AG04449 (cell line): ENCODE measurements at regions of chr14 and their contacts with region 1.

Region 1: DNA sequence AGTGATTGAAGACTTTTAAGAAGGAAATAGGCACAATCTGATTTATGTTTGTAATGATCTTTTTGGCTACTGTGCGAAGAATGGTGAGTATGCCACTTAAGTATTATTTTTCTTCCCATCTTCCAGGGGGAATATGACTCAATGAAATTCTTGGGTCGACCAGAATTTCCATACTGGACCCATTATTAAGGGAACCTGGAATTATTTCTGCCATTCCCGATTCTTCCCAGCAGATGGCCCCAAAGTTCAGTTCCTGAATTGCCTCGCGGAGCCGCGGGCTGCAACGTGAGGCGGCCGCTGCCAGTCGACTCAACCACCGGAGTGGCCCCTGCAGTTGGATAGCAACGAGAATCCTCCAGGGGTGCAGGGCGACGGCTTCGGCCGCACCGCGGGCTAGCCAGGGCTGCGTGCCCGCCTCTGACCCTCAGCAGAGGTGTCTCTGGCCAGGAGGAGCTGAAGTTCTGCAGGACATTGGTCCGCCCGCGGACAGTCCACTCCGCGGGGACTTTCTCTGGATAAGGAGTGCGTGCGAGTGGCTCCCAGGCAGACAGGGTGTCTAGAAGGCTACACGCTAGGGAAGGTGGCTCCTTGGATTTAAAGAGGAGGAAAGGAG is 628 bp upstream of the TSHR start:
- DNase-seq: peak; percentile 21
- H3K4me3 ChIP-seq: peak overlapping the region; percentile 65
- CTCF ChIP-seq: peak; percentile 59

Region 2: DNA sequence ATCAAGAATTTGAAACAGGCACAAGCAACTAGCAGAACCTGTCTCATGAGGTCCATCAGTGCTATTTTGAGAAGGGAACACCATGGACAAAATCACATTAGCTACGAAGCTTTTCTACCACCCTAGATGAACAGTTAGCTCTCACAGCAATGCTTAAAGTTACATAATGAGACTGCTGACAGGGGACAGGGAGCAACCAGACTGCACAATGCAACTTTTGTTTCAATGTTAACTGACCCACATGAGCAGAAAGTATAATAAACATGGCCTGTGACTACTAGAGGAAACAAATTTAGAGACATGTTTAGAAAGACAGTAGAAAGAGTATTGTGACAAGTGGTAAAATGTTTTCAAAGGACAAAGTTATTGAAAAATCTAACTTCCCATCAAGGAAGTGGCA is 296.1 kb before region 1 on chr14:
- CTCF ChIA-PET with region 1: no interaction called
- POLR2A ChIA-PET with region 1: no interaction called
- DNase-seq: no peak
- H3K4me3 ChIP-seq: no peak overlapping the region
- CTCF ChIP-seq: no peak

Region 3: DNA sequence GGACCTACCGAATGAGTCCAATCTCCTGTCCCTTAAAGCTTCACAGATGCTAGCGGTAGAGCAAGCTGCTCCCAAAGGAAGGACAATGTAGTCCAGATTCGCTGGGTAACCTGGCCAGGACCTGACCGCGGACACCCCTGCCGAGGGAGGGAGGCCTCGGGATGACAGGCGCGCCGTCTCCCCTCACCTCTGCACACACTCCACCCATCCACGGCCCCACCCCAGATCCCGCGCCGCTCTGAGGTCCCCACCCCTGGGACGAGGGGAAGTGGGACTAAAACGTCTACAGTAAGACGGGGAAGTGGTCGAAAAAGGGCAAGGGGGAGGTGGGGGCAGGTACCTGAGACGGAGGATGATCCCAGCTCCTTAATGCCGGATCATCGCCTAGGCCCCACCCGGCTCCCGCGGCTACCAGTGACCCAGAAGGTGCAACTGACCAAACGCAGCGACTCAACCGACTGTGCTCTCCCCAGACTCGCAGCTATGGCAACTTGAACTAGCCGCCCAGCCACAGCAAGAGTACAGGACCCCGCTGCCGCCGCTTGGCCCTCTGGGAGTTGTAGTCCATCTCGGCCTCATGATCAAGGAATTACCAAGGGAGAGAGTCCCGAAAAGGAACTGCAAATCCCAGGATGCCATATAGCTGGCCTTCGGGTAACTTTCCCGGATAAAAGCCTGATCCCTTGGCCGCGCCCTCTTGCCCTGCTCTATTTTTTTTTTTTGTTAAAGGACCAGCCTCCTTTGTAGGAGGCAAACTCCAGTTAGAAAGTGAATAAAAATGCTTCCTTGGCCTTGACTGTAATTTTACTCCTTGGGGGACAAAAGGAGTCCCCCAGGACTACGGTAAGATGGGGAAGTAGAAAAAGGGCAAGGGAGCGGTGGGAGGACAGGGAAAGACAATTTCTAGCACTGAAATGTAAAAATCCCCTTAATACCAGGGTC is 13.3 kb before region 1 on chr14 and contains the start of gene CEP128:
- CTCF ChIA-PET with region 1: interaction called, 13 read pairs
- POLR2A ChIA-PET with region 1: no interaction called
- DNase-seq: peak; percentile 81
- H3K4me3 ChIP-seq: peak within 1 kb of the TSS; percentile 89
- CTCF ChIP-seq: no peak

Region 4: GRCh38 chr14:80965037-80965436 is 10.2 kb after region 1 on chr14:
- CTCF ChIA-PET with region 1: interaction called, 41 read pairs
- POLR2A ChIA-PET with region 1: no interaction called
- DNase-seq: no peak
- H3K4me3 ChIP-seq: no peak overlapping the region
- CTCF ChIP-seq: no peak

Region 5: DNA sequence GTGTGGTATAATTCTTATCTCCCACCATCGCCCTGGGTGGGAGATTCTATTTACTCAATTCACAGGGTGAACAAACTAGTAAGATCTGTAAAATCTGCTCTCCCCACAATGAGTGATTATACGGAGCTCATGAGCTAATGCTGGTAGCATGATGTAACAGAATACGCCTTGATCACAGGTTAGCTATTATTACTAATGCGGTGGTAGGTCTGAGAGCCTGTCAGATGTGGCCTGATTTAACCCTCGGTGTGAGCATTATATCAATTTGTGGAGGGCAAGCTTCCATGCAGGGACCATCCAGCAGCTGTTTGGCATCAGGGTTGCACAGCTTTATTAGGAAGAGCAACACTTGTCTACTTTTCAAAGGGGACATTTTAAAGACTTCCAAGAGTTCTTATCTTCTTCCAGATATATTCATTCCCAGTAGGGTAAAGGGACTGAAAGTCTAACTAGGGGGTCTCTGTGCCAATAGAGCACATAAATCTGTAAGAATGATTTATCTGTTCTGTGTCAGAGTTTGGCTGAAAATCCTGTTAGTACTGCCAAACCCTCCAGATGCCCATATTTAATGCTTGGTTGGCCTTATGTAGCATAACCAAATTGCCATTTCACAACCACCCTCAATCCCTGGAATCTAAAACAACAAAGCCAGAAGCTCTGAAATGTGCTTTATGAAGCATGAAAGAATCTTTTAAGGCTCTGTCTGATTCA is 19.3 kb after region 1 on chr14:
- CTCF ChIA-PET with region 1: interaction called, 41 read pairs
- POLR2A ChIA-PET with region 1: no interaction called
- DNase-seq: peak; percentile 46
- H3K4me3 ChIP-seq: no peak overlapping the region
- CTCF ChIP-seq: no peak

Region 6: GRCh38 chr14:81170104-81170828 is 215.5 kb after region 1 on chr14:
- CTCF ChIA-PET with region 1: interaction called, 12 read pairs
- POLR2A ChIA-PET with region 1: no interaction called
- DNase-seq: peak; percentile 37
- H3K4me3 ChIP-seq: peak overlapping the region; percentile 72
- CTCF ChIP-seq: peak; percentile 69